Activated naive CD4-positive, alpha-beta T cell treated with anti-CD3 and anti-CD28 coated beads for 36 hours (primary cell): ENCODE measurements at regions of chr6 and their contacts with region 1.

Region 1: GRCh38 chr6:16319813-16320532 is 81.6 kb downstream of the GMPR start:
- DNase-seq: peak; percentile 86
- H3K4me3 Mint-ChIP-seq: peak overlapping the region; percentile 54
- H3K27ac Mint-ChIP-seq: peak overlapping the region; percentile 85
- H3K4me1 Mint-ChIP-seq: peaks cover 75% of the 10 kb centered on the region
- H3K27me3 Mint-ChIP-seq: no peaks in the 10 kb centered on the region

Region 2: GRCh38 chr6:16136621-16137450 is 183.1 kb before region 1 on chr6:
- CTCF ChIA-PET with region 1: no interaction called
- intact Hi-C with region 1: loop called (anchors 1 kb)
- DNase-seq: peak; percentile 76
- H3K4me3 Mint-ChIP-seq: peak overlapping the region; percentile 55
- H3K27ac Mint-ChIP-seq: peak overlapping the region; percentile 87
- H3K4me1 Mint-ChIP-seq: peaks cover 70% of the 10 kb centered on the region
- H3K27me3 Mint-ChIP-seq: no peaks in the 10 kb centered on the region

Region 3: GRCh38 chr6:16168858-16169257 is 151.1 kb before region 1 on chr6:
- CTCF ChIA-PET with region 1: no interaction called
- intact Hi-C with region 1: no loop called
- DNase-seq: no peak
- H3K4me3 Mint-ChIP-seq: no peak overlapping the region
- H3K27ac Mint-ChIP-seq: no peak overlapping the region
- H3K4me1 Mint-ChIP-seq: peaks cover 15% of the 10 kb centered on the region
- H3K27me3 Mint-ChIP-seq: peaks cover 16% of the 10 kb centered on the region

Region 4: GRCh38 chr6:16397623-16398022 is 77.7 kb after region 1 on chr6:
- CTCF ChIA-PET with region 1: no interaction called
- intact Hi-C with region 1: no loop called
- DNase-seq: no peak
- H3K4me3 Mint-ChIP-seq: no peak overlapping the region
- H3K27ac Mint-ChIP-seq: no peak overlapping the region
- H3K4me1 Mint-ChIP-seq: no peaks in the 10 kb centered on the region
- H3K27me3 Mint-ChIP-seq: no peaks in the 10 kb centered on the region

Region 5: DNA sequence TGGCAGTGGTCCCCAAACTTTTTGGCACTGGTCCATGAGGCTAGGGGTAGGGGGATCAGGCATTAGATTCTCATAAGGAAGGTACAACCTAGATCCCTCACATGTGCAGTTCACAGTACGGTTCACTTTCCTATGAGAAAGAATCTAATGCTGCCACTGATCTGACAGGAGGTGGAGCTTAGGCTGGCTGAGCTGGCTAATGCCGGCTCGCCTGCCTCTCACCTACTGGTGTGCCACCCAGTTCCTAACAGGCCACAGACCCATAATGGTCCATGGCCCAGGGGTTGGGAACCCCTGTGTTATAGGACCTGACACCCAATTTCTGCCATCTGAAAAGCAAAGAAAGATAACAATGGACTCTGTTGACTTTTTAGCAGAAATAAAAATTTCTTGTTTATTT is 118.0 kb after region 1 on chr6:
- CTCF ChIA-PET with region 1: no interaction called
- intact Hi-C with region 1: loop called (anchors 1 kb)
- DNase-seq: no peak
- H3K4me3 Mint-ChIP-seq: peak overlapping the region; percentile 78
- H3K27ac Mint-ChIP-seq: peak overlapping the region; percentile 89
- H3K4me1 Mint-ChIP-seq: peaks cover 65% of the 10 kb centered on the region
- H3K27me3 Mint-ChIP-seq: no peaks in the 10 kb centered on the region

Region 6: DNA sequence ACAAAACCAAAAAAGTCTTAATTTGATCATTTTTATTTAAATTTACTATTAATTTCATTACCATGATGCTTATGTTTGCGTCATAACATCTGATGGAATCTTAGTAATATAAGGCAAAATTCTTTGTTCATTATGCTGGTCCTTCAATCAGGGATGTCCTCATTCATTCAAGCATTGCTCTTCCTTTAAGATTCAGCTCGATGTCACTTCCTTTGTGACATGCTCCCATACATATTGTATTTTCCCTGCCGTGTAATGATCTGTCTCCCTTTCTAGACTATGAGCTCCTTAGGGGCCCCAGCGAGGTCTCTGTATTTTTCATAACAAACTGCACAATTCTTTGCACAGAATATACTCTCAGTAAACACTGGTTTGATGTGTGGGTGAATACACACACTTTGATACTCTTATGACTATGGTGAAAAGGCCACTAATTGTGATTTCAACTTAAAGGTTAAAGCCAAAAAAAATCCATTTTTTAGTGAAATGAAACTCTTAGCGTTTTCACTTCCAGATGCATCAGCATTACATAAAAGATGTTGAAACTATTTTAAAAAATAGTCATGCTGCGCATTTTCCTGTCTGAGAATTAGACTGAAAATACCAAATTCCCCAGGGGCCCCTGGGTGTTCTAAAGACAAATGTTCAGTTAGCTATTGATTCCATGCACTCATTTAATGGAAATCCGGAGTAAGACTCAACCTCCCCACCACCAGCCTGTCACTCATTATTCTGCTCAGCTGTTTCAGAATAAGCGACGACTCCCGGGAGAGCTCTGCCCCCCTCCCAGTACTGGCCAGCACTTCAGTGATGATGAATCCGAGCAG is 271.6 kb after region 1 on chr6:
- CTCF ChIA-PET with region 1: no interaction called
- intact Hi-C with region 1: loop called (anchors 2 kb)
- DNase-seq: peak; percentile 46
- H3K4me3 Mint-ChIP-seq: no peak overlapping the region
- H3K27ac Mint-ChIP-seq: peak overlapping the region; percentile 48
- H3K4me1 Mint-ChIP-seq: peaks cover 18% of the 10 kb centered on the region
- H3K27me3 Mint-ChIP-seq: no peaks in the 10 kb centered on the region

Region 7: DNA sequence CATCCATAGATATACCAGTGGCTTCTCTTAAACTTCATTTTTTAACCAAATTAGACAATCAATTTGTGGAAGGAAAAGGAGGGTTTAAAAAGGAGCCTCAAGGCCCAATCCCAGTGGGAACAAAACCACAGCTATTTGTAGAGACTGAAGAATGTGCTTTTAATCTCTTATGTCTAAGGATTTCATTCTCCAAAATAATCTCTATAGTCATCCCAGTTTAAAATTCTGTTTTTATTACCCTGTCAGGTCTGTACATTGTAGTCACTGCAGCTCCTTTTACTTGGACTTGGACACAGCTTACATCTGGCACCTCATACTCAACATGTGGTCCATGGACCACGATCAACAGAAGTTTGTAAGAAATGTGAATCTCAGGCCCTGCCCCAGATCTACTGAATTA is 629.7 kb after region 1 on chr6:
- CTCF ChIA-PET with region 1: interaction called, 5 read pairs
- intact Hi-C with region 1: loop called (anchors 2 kb)
- DNase-seq: no peak
- H3K4me3 Mint-ChIP-seq: no peak overlapping the region
- H3K27ac Mint-ChIP-seq: no peak overlapping the region
- H3K4me1 Mint-ChIP-seq: peaks cover 16% of the 10 kb centered on the region
- H3K27me3 Mint-ChIP-seq: peaks cover 54% of the 10 kb centered on the region

Region 8: GRCh38 chr6:18264219-18264922 is 1944.4 kb after region 1 on chr6 and contains the start of gene DEK:
- CTCF ChIA-PET with region 1: no interaction called
- intact Hi-C with region 1: loop called (anchors 5 kb)
- DNase-seq: peak; percentile 91
- H3K4me3 Mint-ChIP-seq: peak within 1 kb of the TSS; percentile 96
- H3K27ac Mint-ChIP-seq: peak within 1 kb of the TSS; percentile 98
- H3K4me1 Mint-ChIP-seq: peaks cover 47% of the 10 kb centered on the region
- H3K27me3 Mint-ChIP-seq: no peaks in the 10 kb centered on the region
- total RNA-seq, gene DEK: 200 to 203 TPM